Astrocyte of the cerebellum (primary cell): ENCODE measurements at regions of chr6 and their contacts with region 1.

Region 1: DNA sequence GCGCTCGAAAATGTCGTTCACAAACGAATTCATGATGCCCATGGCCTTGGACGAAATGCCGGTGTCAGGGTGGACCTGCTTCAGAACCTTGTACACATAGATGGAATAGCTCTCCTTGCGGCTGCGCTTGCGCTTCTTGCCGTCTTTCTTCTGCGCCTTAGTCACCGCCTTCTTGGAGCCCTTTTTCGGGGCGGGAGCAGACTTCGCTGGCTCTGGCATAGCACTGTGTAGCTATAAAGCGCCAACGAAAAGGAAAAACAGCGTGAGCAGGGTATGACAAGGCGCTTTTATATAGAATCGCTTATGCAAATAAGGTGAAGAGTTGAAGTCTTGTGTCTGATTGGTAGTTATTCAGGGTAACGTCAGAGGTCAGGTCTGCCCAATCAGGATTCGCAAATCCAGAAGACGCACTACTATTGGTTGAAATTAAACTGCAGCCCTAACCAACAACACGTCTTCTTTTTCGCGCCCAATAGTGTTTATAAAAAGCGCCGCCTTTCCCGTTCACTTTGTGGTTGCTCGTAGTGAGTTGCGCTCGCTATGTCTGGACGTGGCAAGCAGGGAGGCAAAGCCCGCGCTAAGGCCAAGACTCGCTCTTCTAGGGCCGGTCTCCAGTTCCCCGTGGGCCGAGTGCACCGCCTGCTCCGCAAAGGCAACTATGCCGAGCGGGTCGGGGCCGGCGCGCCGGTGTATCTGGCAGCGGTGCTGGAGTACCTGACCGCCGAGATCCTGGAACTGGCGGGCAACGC is 114.8 kb upstream of the PRSS16 start:
- DNase-seq: peak; percentile 100
- H3K4me3 ChIP-seq: peak overlapping the region; percentile 54
- CTCF ChIP-seq: no peak

Region 2: GRCh38 chr6:26025894-26026832 is 1106.5 kb before region 1 on chr6:
- in situ Hi-C with region 1: loop called (anchors 25 kb)
- DNase-seq: peak; percentile 95
- H3K4me3 ChIP-seq: peak overlapping the region; percentile 65
- CTCF ChIP-seq: peak; percentile 94